AG04450 (cell line): ENCODE measurements at regions of chr12 and their contacts with region 1.

Region 1: GRCh38 chr12:53344824-53345485 is 8.8 kb upstream of the SP7 start:
- DNase-seq: peak; percentile 33
- H3K4me3 ChIP-seq: peak overlapping the region; percentile 76
- H3K27ac ChIP-seq: peak overlapping the region; percentile 11
- H3K27me3 ChIP-seq: peaks cover 8% of the 10 kb centered on the region
- CTCF ChIP-seq: peak; percentile 88

Region 2: GRCh38 chr12:53279283-53279869 is 65.6 kb before region 1 on chr12:
- CTCF ChIA-PET with region 1: no interaction called
- POLR2A ChIA-PET with region 1: no interaction called
- DNase-seq: no peak
- H3K4me3 ChIP-seq: no peak overlapping the region
- H3K27ac ChIP-seq: no peak overlapping the region
- H3K27me3 ChIP-seq: no peaks in the 10 kb centered on the region
- CTCF ChIP-seq: no peak

Region 3: DNA sequence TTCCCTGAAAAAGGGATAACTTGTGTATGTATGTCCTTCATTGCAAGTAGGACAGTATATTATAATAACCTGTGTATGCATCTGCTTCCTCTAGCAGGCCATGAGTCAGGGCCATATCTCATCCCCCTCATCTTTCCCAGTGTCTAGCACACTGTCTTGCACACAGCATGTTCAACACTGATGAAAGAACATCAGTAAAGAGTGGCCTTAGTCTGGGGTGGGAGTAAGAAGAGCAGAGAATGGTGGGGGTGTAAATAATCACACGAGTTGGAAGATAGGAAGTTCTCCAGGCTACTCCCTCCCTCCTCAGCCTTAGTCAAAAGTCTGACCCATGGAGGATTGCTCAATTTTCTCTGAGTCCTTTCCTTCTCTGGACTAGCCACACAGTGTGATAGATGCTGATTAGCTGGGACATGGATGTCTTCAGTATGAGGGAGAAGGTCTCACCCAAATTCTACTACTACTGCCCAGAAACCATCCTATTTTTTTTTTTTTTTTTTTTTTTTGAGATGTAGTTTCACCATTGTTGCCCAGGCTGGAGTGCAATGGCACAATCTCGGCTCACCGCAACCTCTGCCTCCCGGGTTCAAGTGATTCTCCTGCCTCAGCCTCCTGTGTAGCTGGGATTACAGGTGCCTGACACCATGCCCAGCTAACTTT is 20.4 kb after region 1 on chr12:
- CTCF ChIA-PET with region 1: interaction called, 10 read pairs
- POLR2A ChIA-PET with region 1: no interaction called
- DNase-seq: no peak
- H3K4me3 ChIP-seq: no peak overlapping the region
- H3K27ac ChIP-seq: no peak overlapping the region
- H3K27me3 ChIP-seq: no peaks in the 10 kb centered on the region
- CTCF ChIP-seq: no peak

Region 4: GRCh38 chr12:53414756-53415417 is 69.9 kb after region 1 on chr12:
- CTCF ChIA-PET with region 1: interaction called, 16 read pairs
- POLR2A ChIA-PET with region 1: no interaction called
- DNase-seq: no peak
- H3K4me3 ChIP-seq: no peak overlapping the region
- H3K27ac ChIP-seq: no peak overlapping the region
- H3K27me3 ChIP-seq: no peaks in the 10 kb centered on the region
- CTCF ChIP-seq: no peak

Region 5: GRCh38 chr12:53956251-53956887 is 611.4 kb after region 1 on chr12:
- CTCF ChIA-PET with region 1: no interaction called
- POLR2A ChIA-PET with region 1: no interaction called
- DNase-seq: no peak
- H3K4me3 ChIP-seq: no peak overlapping the region
- H3K27ac ChIP-seq: no peak overlapping the region
- H3K27me3 ChIP-seq: peaks cover 95% of the 10 kb centered on the region
- CTCF ChIP-seq: no peak